SK-N-SH (cell line): ENCODE measurements at regions of chr11 and their contacts with region 1.

Region 1: DNA sequence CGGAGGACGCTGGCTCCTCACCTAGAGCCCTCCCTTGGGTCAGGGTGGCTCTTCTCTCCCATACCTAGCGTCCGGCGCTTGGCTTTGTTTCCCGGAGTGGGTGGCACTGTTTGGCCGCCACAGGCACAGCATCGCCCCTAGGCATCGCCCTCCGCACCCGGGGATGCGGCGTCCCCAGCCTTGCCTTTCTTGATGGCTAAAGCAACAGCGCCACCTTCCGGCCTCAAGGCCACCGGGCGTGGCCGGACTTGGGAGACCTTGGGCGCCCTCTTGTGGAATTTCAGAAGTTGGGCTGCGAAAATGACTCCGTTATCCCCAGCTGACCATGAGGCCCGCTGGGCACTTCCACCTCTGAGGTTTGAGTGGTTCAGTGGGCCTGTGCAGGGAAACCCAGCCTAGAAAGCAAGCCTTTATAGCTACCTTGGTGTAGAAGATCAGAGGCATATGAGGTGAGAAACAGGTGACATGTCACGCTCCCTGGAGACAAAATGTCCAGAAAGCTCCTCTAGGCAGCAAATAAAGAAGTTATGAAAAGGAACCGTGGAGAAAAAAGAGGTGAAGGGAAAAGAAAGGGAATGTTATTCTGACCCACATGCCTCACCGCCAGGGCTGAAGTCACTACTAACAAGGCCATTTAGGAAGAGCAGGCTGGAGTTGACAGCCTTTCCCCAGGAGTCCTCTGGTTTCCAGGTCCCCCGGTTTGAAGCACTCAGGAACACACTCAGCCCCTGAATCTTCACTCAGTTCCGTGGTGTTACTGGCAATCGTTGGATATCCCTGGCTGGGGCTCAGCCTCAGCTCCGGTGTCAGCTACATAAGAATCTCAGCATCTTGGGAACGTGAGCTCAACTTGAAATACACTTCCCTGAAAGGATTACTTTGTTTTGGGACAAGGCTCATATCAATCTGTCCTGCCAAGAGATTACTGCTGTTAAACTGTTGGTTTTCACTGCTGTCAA is 54.1 kb downstream of the SNX19 start:
- DNase-seq: peak; percentile 87
- H3K4me3 ChIP-seq: peak overlapping the region in 1 of 2 experiments; percentile 55; a peak in 1 of 4 replicates
- H3K27ac ChIP-seq: no peak overlapping the region
- H3K4me1 ChIP-seq: peaks cover 0 to 2% of the 10 kb centered on the region in 2 experiments; a peak in 1 of 4 replicates
- H3K27me3 ChIP-seq: no peaks in the 10 kb centered on the region
- CTCF ChIP-seq: peak; percentile 99
- EP300 ChIP-seq: no peak
- RAD21 ChIP-seq: peak; percentile 99

Region 2: DNA sequence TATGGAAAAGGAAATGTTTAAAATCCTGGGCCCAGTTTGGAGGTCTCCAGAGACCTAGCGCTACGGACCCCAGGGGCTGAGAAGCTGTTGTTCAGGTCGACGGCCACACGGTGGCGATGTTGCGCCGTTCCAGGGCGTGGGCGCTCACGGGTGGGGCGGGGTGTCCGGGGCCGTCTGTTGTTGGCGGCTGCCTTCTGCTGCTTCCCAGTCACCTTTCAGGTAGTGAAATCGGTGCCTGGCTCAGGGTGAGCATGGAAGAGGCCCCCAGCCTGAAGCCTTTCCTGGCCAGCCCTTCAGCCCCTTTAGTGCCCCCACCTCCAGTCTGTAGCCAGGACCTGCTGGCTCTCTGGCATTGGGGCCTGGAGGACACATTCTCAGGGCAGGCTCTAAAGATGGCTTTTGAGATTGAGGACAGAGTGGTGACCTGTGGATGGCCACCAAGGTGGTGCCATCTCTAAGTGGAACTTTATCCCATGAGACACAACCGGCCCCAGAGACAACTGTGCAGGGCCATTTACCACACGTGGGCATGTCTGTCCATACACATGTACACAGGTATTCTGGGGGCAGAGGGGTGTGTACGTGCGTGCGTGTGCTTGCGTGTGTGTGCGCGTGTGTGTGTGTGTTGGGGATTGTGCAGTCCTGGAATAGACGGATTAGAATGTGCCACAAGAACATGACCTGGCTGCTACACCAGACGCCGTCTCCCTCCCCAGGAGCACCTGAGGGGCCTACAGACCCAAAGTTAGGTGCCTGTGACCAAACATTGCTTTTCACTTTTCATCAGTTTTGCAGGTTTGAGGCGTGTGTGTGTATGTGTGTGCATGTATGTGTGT is 648.8 kb before region 1 on chr11:
- CTCF ChIA-PET with region 1: interaction called, 27 read pairs
- POLR2A ChIA-PET with region 1: interaction called, 4 read pairs
- DNase-seq: peak; percentile 94
- H3K4me3 ChIP-seq: peak overlapping the region; percentile 9 to 30; a peak in 2 of 4 replicates
- H3K27ac ChIP-seq: no peak overlapping the region
- H3K4me1 ChIP-seq: peaks cover 0 to 7% of the 10 kb centered on the region in 2 experiments; a peak in 1 of 4 replicates
- H3K27me3 ChIP-seq: peaks cover 20% of the 10 kb centered on the region
- CTCF ChIP-seq: peak; percentile 94
- EP300 ChIP-seq: no peak
- RAD21 ChIP-seq: peak; percentile 87

Region 3: DNA sequence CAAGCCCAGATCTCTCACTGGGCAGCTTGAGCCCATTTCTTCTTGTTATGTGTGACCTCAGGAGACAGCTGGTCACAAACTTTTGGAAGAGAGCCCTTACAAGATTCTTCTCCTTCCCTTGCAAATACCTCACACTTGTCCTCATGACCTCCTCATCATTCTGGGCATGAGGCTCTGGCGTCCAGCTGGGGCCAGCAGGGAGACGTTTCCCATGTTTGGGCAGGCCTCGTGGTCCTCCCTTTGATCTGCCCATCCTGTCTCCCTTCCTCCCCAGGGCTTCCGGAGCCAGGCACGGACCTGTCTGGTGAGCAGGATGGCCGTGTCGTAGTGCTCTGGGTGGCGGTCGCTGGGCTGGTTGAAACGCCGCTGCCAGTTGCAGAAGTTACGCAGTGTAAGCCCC is 443.4 kb before region 1 on chr11:
- CTCF ChIA-PET with region 1: interaction called, 747 read pairs
- POLR2A ChIA-PET with region 1: no interaction called
- DNase-seq: no peak
- H3K4me3 ChIP-seq: no peak overlapping the region
- H3K27ac ChIP-seq: no peak overlapping the region
- H3K4me1 ChIP-seq: no peaks in the 10 kb centered on the region
- H3K27me3 ChIP-seq: peaks cover 10% of the 10 kb centered on the region; the same call in 1 of the 2 replicates
- CTCF ChIP-seq: no peak
- EP300 ChIP-seq: no peak
- RAD21 ChIP-seq: no peak

Region 4: GRCh38 chr11:130448416-130449309 is 413.5 kb before region 1 on chr11 and contains the start of gene ADAMTS15:
- CTCF ChIA-PET with region 1: interaction called, 747 read pairs
- POLR2A ChIA-PET with region 1: no interaction called
- DNase-seq: peak; percentile 81
- H3K4me3 ChIP-seq: peak within 1 kb of the TSS; percentile 59 to 83
- H3K27ac ChIP-seq: peak within 1 kb of the TSS in 1 of 2 experiments; percentile 41; a peak in 1 of 4 replicates
- H3K4me1 ChIP-seq: peaks cover 0 to 9% of the 10 kb centered on the region in 2 experiments; a peak in 2 of 4 replicates
- H3K27me3 ChIP-seq: no peaks in the 10 kb centered on the region
- CTCF ChIP-seq: no peak
- EP300 ChIP-seq: no peak
- RAD21 ChIP-seq: no peak
- polyA plus RNA-seq, gene ADAMTS15: 0.96 and 1.1 TPM in 2 replicates

Region 5: DNA sequence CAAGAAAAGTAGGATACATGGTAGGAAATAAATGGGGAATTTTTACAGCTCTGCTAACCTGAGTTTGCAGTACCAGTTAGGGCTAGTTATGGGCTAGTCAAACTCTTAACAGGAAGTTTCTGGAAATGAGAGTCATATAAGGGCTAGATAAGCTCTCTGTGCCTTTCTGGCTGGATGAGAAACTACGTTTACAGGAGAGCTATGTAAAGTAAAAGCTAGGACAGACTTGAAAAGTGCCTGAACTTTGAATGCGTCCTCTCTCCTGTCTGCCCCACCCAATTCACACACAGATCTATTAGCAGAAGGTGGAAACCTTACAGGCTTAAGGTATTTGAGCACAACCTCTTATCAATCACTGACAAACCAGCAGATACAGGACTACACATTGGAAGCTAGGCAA is 113.0 kb before region 1 on chr11:
- CTCF ChIA-PET with region 1: no interaction called
- POLR2A ChIA-PET with region 1: no interaction called
- DNase-seq: no peak
- H3K4me3 ChIP-seq: no peak overlapping the region
- H3K27ac ChIP-seq: no peak overlapping the region
- H3K4me1 ChIP-seq: no peaks in the 10 kb centered on the region
- H3K27me3 ChIP-seq: no peaks in the 10 kb centered on the region
- CTCF ChIP-seq: no peak
- EP300 ChIP-seq: no peak
- RAD21 ChIP-seq: no peak

Region 6: GRCh38 chr11:130827451-130828377 is 34.5 kb before region 1 on chr11:
- CTCF ChIA-PET with region 1: interaction called, 18 read pairs
- POLR2A ChIA-PET with region 1: no interaction called
- DNase-seq: peak; percentile 53
- H3K4me3 ChIP-seq: no peak overlapping the region
- H3K27ac ChIP-seq: peak overlapping the region in 1 of 2 experiments; percentile 54; a peak in 2 of 4 replicates
- H3K4me1 ChIP-seq: peaks cover 8 to 13% of the 10 kb centered on the region in 2 experiments
- H3K27me3 ChIP-seq: no peaks in the 10 kb centered on the region
- CTCF ChIP-seq: peak; percentile 72
- EP300 ChIP-seq: no peak
- RAD21 ChIP-seq: peak; percentile 64

Region 7: DNA sequence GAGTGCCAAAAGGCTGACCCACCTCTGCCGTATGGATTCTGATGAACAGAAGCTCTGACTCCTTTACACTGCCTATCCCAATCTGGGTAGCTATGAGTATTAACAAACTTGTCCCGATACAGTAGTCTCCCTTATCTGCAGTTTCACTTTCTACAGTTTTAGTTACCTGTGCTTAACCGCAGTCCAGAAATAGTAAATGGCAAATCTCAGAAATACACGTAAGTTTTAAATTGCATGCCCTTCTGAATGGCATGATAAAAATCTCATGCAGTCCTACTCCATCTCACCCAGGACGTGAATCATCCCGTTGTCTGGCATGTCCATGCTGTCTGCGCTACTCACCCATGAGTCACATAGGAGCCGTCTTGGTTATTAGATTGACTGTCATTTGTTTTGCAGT is 14.7 kb before region 1 on chr11:
- CTCF ChIA-PET with region 1: interaction called, 25 read pairs
- POLR2A ChIA-PET with region 1: no interaction called
- DNase-seq: no peak
- H3K4me3 ChIP-seq: peak overlapping the region in 1 of 2 experiments; percentile 27; a peak in 2 of 4 replicates
- H3K27ac ChIP-seq: peak overlapping the region; percentile 43 to 75; a peak in 3 of 4 replicates
- H3K4me1 ChIP-seq: peaks cover 0 to 28% of the 10 kb centered on the region in 2 experiments; a peak in 2 of 4 replicates
- H3K27me3 ChIP-seq: no peaks in the 10 kb centered on the region
- CTCF ChIP-seq: no peak
- EP300 ChIP-seq: peak in 1 of 2 experiments; percentile 91; a peak in 2 of 4 replicates
- RAD21 ChIP-seq: no peak

Region 8: DNA sequence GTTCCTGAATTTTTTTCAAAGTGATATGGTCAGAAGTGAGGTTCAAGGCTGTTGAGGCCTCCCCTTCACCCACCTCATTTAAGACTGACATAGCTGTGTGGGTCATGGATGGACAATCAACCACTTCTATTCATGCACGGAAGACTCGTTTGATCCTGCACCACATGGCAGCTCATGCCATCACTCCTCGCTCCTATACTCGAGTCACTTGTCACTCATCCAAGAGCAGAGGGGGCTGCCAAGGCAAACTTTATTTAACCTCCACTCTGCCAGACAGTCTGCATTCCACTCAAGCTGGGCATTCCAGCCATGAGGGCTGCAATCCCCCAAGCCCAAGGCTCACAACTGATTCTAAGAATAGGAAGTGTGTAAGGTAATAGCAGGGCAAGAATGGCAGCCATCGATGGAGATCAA is 20.0 kb after region 1 on chr11:
- CTCF ChIA-PET with region 1: interaction called, 101 read pairs
- POLR2A ChIA-PET with region 1: no interaction called
- DNase-seq: no peak
- H3K4me3 ChIP-seq: no peak overlapping the region
- H3K27ac ChIP-seq: no peak overlapping the region
- H3K4me1 ChIP-seq: no peaks in the 10 kb centered on the region
- H3K27me3 ChIP-seq: no peaks in the 10 kb centered on the region
- CTCF ChIP-seq: no peak
- EP300 ChIP-seq: no peak
- RAD21 ChIP-seq: no peak